ENCODE measurements at regions of chr5 and their contacts with region 1.

Region 1: GRCh38 chr5:180670586-180671359 is 21.4 kb upstream of the FLT4 start:
- DNase-seq: peak in 4 of 5 donors; percentile 32 to 58 (median 50)
- ATAC-seq: peak in 3 of 4 donors; percentile 63 to 75 (median 74)
- H3K4me3 ChIP-seq: no peak overlapping the region
- H3K27ac ChIP-seq: no peak overlapping the region
- H3K4me1 ChIP-seq: peaks cover 0 to 9% (median 0%) of the 10 kb centered on the region in 12 donors
- H3K27me3 ChIP-seq: peaks cover 9 to 29% (median 21%) of the 10 kb centered on the region in 9 donors
- CTCF ChIP-seq: peak; percentile 55 to 80 (median 67)
- POLR2A ChIP-seq: no peak

Region 2: DNA sequence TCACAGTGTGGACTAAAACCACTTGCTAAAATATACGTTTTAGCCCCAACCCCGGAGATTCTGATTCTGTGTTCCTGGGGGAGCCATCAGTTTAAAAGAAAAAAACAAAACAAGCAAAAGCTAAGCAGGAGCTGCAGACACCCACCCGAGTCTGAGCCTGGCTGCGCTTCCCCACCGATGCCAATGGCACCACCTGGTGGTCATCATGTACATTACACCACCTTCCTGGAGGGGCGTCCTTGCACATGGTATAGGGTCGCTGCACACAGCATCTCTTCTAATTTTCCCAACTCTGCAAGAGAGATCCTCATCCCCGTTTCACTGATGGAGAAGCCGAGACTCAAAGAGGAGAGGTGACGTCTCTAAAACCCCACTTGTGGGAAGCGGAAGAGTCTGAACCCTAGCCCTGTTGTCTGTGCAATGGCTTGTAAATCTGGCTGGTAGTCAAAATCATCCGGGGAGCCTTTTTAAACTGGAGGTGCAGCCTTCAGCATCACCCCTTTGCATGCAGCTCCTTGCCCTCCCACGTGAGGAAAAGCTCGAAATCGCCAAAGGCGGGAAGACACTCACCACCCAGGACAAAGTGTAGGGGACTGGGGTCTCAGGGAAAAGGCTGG is 199.7 kb before region 1 on chr5:
- intact Hi-C with region 1: loop called in 1 of 10 experiments (anchors 10 kb)
- DNase-seq: peak in 3 of 5 donors; percentile 46 to 58 (median 48)
- ATAC-seq: peak; percentile 52 to 81 (median 78)
- H3K4me3 ChIP-seq: no peak overlapping the region
- H3K27ac ChIP-seq: no peak overlapping the region
- H3K4me1 ChIP-seq: peaks cover 0 to 12% (median 0%) of the 10 kb centered on the region in 12 donors
- H3K27me3 ChIP-seq: peaks cover 0 to 5% (median 0%) of the 10 kb centered on the region in 9 donors
- CTCF ChIP-seq: peak; percentile 82 to 95 (median 93)
- POLR2A ChIP-seq: no peak

Measured in heart left ventricle (tissue), 16 donors.